Activated B cell treated with CpG ODN at 0.5 μM for 24 hours (primary cell): ENCODE measurements at regions of chr7 and their contacts with region 1.

Region 1: DNA sequence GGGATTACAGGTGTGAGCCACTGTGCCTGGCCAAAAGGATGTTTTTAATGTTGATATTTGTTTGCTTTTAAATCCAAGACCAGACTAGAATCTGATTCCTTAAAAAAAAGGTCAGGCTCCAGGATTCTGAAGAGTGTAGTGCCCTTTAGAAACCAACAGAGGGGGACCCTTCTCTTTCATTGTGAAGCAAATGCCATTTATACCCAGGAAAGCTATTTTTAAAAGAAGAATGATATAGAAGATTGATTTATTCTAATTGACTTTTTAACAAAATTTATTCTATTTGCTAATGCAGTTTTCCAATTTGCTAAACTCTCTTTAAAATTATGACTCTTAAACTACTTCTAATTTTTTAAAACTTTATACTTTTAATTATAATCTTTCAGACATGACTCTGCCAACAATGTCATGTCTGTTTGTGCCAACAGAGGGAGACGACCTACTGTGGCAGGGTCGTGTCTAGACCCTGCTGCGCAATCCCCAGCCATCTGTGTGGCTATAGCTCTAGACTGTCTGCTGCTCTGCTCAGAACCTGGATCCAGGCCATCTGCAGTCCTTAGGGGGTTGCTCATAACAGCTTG is 201.0 kb upstream of the IMMP2L start:
- DNase-seq: no peak
- ATAC-seq: no peak
- H3K4me3 Mint-ChIP-seq: no peak overlapping the region
- H3K27ac Mint-ChIP-seq: no peak overlapping the region
- H3K4me1 Mint-ChIP-seq: no peaks in the 10 kb centered on the region
- H3K27me3 Mint-ChIP-seq: no peaks in the 10 kb centered on the region
- CTCF ChIP-seq: no peak

Region 2: GRCh38 chr7:111697776-111698175 is 65.5 kb before region 1 on chr7:
- CTCF ChIA-PET with region 1: no interaction called
- POLR2A ChIA-PET with region 1: no interaction called
- intact Hi-C with region 1: no loop called
- DNase-seq: no peak
- ATAC-seq: no peak
- H3K4me3 Mint-ChIP-seq: no peak overlapping the region
- H3K27ac Mint-ChIP-seq: no peak overlapping the region
- H3K4me1 Mint-ChIP-seq: no peaks in the 10 kb centered on the region
- H3K27me3 Mint-ChIP-seq: no peaks in the 10 kb centered on the region
- CTCF ChIP-seq: no peak

Region 3: GRCh38 chr7:111708072-111708471 is 55.2 kb before region 1 on chr7:
- CTCF ChIA-PET with region 1: no interaction called
- POLR2A ChIA-PET with region 1: no interaction called
- intact Hi-C with region 1: no loop called
- DNase-seq: no peak
- ATAC-seq: no peak
- H3K4me3 Mint-ChIP-seq: no peak overlapping the region
- H3K27ac Mint-ChIP-seq: no peak overlapping the region
- H3K4me1 Mint-ChIP-seq: no peaks in the 10 kb centered on the region
- H3K27me3 Mint-ChIP-seq: peaks cover 13% of the 10 kb centered on the region
- CTCF ChIP-seq: no peak

Region 4: DNA sequence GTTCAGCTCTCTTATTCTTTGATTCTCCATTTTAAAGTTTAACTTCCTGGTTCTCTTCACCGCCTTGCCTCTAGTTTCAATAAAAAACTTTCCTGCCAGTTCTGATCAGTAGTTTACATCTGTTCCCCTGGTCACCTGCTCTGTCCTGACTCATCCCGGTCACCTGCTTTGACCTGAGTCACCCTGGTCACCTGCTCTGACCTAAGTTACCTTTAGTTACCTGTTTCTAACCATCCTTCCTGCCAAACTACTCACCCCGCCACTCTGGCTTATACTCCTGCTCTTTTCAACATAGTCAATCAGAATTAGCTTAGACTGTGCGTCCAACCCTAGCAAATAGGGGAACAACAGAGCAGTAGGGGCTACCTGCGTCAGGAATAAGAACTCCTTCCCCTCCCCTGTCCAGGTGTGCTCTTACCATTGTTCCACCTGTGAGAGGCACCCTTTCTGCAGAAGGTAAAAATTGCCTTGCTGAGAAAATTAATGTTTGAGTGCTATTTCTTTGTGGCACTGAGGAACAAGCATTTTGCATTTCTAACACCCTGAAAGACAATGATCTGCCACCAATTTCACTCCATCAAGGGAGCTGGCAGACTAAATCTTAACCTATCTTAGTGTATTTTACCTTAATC is 179.3 kb after region 1 on chr7:
- CTCF ChIA-PET with region 1: no interaction called
- POLR2A ChIA-PET with region 1: no interaction called
- intact Hi-C with region 1: no loop called
- DNase-seq: no peak
- ATAC-seq: no peak
- H3K4me3 Mint-ChIP-seq: no peak overlapping the region
- H3K27ac Mint-ChIP-seq: no peak overlapping the region
- H3K4me1 Mint-ChIP-seq: no peaks in the 10 kb centered on the region
- H3K27me3 Mint-ChIP-seq: no peaks in the 10 kb centered on the region
- CTCF ChIP-seq: no peak

Region 5: DNA sequence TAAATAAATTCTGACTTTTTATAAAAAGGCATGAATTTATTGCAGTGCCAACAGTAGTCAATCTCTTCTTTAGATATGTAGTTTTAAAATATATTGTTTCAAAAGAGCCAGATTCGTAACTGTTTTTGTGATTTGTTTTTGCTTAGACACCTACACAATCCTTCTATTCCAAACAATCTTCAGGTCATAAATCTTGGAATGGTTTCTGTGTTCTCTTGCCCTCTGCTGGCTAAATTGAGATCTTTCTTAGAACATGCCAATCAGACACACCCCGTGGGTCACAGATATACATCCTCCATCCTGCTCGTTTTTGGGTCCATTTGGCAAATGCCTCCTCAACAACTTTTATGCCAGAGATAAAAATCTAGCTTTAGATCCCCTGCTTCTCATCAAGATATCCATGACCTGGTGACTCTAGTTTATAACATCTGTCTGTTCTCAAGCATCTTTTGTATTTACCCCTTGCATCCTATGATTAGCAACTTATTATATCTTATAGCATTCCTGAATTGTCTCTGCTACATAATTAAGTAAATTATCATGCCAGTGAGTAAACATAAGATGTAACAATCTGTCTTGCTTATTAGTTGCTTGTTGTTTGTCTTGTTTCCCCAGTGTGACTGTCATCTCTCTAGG is 651.7 kb after region 1 on chr7:
- CTCF ChIA-PET with region 1: no interaction called
- POLR2A ChIA-PET with region 1: no interaction called
- intact Hi-C with region 1: loop called (anchors 1 kb)
- DNase-seq: no peak
- ATAC-seq: no peak
- H3K4me3 Mint-ChIP-seq: no peak overlapping the region
- H3K27ac Mint-ChIP-seq: no peak overlapping the region
- H3K4me1 Mint-ChIP-seq: no peaks in the 10 kb centered on the region
- H3K27me3 Mint-ChIP-seq: peaks cover 16% of the 10 kb centered on the region
- CTCF ChIP-seq: no peak

Region 6: GRCh38 chr7:113421696-113422330 is 1658.5 kb after region 1 on chr7:
- CTCF ChIA-PET with region 1: no interaction called
- POLR2A ChIA-PET with region 1: no interaction called
- intact Hi-C with region 1: loop called (anchors 1 kb)
- DNase-seq: peak; percentile 32
- ATAC-seq: peak; percentile 99
- H3K4me3 Mint-ChIP-seq: no peak overlapping the region
- H3K27ac Mint-ChIP-seq: no peak overlapping the region
- H3K4me1 Mint-ChIP-seq: peaks cover 3% of the 10 kb centered on the region
- H3K27me3 Mint-ChIP-seq: no peaks in the 10 kb centered on the region
- CTCF ChIP-seq: no peak